HCT116 (cell line): ENCODE measurements at regions of chr17 and their contacts with region 1.

Region 1: DNA sequence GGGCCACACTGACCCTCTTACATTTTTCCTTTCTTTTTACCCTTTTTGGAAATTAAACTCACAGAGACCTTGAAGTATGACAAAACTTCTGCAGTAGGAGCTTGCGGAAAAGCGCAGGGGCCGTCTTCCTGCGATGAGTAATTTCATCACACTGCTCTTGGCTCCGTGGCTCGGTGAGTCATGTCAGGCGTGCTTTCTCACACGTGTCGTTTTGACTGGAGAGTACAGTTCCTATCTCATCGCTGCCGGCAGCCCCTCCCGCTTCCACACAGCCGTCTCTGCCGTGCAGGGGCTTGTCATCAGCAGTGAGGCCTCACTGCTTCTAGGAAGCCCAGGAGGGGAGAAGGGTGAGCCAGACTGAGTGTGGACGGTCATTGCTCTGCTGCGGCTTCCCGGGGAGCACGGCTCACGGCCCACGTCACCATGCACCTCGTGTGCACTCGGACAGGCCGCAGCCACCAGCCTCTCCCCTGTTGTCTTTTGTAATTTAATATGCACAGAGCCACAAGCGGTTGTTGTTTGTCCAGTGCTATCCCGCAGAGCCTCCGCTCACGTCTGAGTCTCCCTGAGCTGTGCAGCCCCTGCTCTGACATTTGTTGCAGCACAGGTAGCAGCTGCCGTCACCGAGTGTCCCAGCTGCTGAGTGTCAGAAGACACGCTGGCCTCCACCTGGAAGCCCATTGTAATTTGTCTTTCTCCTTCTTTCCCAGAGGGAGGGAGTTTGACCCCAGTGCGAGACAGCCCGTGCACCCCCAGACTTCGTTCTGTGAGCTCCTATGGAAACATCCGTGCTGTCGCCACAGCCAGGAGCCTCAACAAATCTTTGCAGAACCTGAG is 99.4 kb upstream of the CHMP6 start:
- DNase-seq: peak; percentile 91
- ATAC-seq: peak; percentile 73
- H3K4me3 ChIP-seq: peak overlapping the region; percentile 23 to 47
- H3K27ac ChIP-seq: peak overlapping the region; percentile 96
- H3K4me1 ChIP-seq: peaks cover 37 to 48% of the 10 kb centered on the region in 2 experiments
- H3K27me3 ChIP-seq: no peaks in the 10 kb centered on the region
- CTCF ChIP-seq: no peak
- POLR2A ChIP-seq: no peak
- RAD21 ChIP-seq: no peak; the same call in 1 of the 2 replicates

Region 2: DNA sequence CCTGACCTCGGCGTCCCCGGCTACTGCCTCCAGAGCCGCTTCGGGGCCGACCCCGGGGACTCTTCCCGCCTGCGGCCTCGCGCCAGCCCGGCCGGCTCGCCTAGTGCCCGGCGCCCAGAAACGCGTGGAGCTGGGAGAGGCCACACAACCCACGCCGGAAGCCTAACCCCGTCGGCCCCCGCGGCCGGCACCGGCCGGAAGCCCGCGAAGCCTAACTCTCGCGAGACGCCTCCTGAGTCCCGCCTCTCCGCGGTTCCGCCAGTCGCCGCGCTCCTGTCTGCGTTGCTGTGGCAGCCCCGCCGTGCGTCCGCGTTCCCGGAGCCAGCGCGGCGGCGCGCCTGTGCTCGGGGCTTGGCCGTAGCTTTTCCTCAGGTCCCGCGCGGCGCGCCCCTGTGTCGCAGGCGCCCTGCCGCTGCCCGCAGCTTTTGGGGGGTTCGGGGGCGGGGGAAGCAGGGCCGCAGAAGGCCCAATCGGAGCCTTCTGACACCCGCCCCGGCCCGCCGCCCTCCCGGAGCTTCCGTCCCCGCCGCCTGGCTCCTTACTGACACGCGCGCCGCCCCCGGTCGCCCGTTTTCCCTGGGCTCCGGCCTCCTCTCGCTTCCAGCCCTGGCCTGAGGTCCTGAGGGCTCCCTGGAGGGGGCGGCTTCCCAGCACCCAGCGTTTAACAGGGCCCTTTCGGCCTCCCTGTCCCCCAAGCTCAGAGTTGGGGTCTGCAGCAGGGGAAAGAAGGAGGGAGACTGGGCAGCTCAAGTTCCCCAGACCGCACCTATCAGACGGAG is 437.5 kb before region 1 on chr17:
- CTCF ChIA-PET with region 1: no interaction called
- POLR2A ChIA-PET with region 1: no interaction called
- RAD21 ChIA-PET with region 1: no interaction called
- intact Hi-C with region 1: loop called (anchors 10 kb)
- DNase-seq: peak; percentile 96
- ATAC-seq: peak; percentile 92
- H3K4me3 ChIP-seq: peak overlapping the region; percentile 78 to 82
- H3K27ac ChIP-seq: peak overlapping the region; percentile 91
- H3K4me1 ChIP-seq: peaks cover 11 to 40% of the 10 kb centered on the region in 2 experiments; a peak in 3 of 4 replicates
- H3K27me3 ChIP-seq: no peaks in the 10 kb centered on the region
- CTCF ChIP-seq: no peak
- POLR2A ChIP-seq: peak; percentile 63
- RAD21 ChIP-seq: no peak

Region 3: GRCh38 chr17:80791758-80792284 is 100.4 kb before region 1 on chr17:
- CTCF ChIA-PET with region 1: no interaction called
- POLR2A ChIA-PET with region 1: no interaction called
- RAD21 ChIA-PET with region 1: no interaction called
- intact Hi-C with region 1: no loop called
- DNase-seq: peak; percentile 99
- ATAC-seq: peak; percentile 94
- H3K4me3 ChIP-seq: peak overlapping the region; percentile 8 to 37; a peak in 3 of 4 replicates
- H3K27ac ChIP-seq: peak overlapping the region; percentile 89
- H3K4me1 ChIP-seq: peaks cover 49 to 63% of the 10 kb centered on the region in 2 experiments
- H3K27me3 ChIP-seq: no peaks in the 10 kb centered on the region
- CTCF ChIP-seq: no peak
- POLR2A ChIP-seq: no peak
- RAD21 ChIP-seq: peak; percentile 55

Region 4: DNA sequence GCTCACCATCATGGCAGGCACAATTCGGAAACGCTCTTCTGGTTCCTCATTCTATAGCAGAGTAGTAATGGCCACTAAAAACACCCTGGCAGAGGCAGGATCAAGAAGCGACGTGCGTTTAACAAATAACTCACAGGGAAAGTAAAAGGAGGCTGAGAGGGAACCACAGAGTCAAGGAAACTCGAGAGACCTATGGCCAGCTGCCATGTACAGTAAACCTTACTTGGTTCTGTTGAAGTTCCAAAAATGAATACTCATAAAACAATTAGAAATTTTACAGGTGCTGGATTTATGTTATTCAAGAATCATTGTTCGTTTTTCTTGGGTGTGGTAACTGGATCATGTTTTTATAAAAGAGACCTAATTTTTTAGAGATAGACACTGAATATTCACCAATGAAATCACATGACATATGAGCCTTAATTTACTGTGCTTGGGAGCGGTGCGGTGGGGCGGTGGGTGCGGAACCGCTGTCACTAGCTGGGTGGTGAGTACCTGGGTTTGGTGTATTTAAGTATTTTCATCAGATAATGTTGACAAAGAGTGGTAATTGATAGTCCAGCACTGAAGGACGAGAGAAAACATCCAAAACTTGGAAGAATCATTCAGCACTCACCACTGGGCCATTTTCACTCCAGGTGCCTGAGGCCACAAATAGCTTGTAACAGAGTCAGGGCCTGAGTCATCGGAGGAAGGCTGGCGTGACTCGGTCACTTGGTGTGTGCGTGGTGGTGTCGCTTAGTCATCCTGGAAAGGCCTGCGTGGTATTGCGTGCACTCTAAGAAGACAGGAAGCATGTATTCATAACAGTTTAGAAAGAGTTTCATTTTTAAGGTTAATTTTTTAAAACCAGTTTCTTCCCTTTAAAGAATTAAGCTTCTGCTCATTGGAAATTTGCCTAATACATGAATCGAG is 36.0 kb before region 1 on chr17:
- CTCF ChIA-PET with region 1: no interaction called
- POLR2A ChIA-PET with region 1: interaction called, 3 read pairs
- RAD21 ChIA-PET with region 1: no interaction called
- intact Hi-C with region 1: loop called (anchors 5 kb)
- DNase-seq: peak; percentile 94
- ATAC-seq: peak; percentile 99
- H3K4me3 ChIP-seq: peak overlapping the region in 1 of 2 experiments; percentile 34; a peak in 3 of 4 replicates
- H3K27ac ChIP-seq: peak overlapping the region; percentile 80
- H3K4me1 ChIP-seq: peaks cover 17 to 46% of the 10 kb centered on the region in 2 experiments
- H3K27me3 ChIP-seq: no peaks in the 10 kb centered on the region
- CTCF ChIP-seq: no peak
- POLR2A ChIP-seq: no peak
- RAD21 ChIP-seq: no peak; the same call in 1 of the 2 replicates

Region 5: GRCh38 chr17:80866147-80866793 is 26.0 kb before region 1 on chr17:
- CTCF ChIA-PET with region 1: interaction called, 3 read pairs
- POLR2A ChIA-PET with region 1: no interaction called
- RAD21 ChIA-PET with region 1: no interaction called
- intact Hi-C with region 1: loop called (anchors 2 kb)
- DNase-seq: peak; percentile 37
- ATAC-seq: peak; percentile 95
- H3K4me3 ChIP-seq: no peak overlapping the region
- H3K27ac ChIP-seq: no peak overlapping the region
- H3K4me1 ChIP-seq: no peaks in the 10 kb centered on the region
- H3K27me3 ChIP-seq: no peaks in the 10 kb centered on the region
- CTCF ChIP-seq: peak; percentile 73 to 86 (median 84); a peak in 5 of 6 replicates
- POLR2A ChIP-seq: no peak
- RAD21 ChIP-seq: peak; percentile 75

Region 6: DNA sequence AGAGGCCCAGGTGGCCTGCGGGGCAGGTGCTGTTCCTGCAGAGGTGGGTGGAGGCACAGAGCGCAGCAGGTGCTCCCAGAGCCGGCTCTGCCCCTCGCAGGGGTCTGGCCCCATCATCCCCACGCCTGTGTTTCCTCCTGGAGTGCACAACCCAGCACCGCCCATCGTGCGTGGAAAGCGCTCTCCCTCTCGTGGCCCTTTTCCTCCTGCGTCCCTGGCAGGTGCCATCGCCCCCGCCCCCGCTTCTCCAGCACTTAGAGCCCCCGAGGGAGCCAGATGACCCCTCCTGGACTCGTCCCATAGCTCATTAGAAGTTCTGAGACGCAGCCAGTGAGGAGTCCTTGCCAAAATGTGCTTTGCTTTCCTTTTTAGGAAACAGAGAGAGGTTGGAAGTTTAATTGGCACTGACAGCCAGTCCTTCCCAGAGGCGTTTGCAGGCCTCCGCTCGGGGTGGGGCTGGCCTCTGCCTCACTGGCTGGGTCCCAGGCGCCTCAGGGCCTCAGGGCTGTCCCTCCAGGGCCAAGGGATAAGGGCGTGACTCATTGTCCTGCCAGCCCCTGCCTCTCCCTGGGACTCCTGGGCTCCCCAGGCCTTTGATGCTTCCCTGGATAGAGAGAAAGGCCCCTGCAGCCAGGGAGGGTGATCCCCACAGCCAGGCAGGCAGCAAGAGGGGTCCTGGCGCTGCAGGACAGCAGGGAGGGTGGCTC is 67.2 kb after region 1 on chr17:
- CTCF ChIA-PET with region 1: no interaction called
- POLR2A ChIA-PET with region 1: no interaction called
- RAD21 ChIA-PET with region 1: no interaction called
- intact Hi-C with region 1: no loop called
- DNase-seq: no peak
- ATAC-seq: peak; percentile 7; the same call in 1 of the 2 replicates
- H3K4me3 ChIP-seq: no peak overlapping the region
- H3K27ac ChIP-seq: peak overlapping the region; percentile 22; the same call in 1 of the 2 replicates
- H3K4me1 ChIP-seq: no peaks in the 10 kb centered on the region; a peak in 1 of 4 replicates
- H3K27me3 ChIP-seq: no peaks in the 10 kb centered on the region
- CTCF ChIP-seq: no peak
- POLR2A ChIP-seq: no peak
- RAD21 ChIP-seq: no peak